ENCODE measurements at regions of chr18 and their contacts with region 1.

Region 1: DNA sequence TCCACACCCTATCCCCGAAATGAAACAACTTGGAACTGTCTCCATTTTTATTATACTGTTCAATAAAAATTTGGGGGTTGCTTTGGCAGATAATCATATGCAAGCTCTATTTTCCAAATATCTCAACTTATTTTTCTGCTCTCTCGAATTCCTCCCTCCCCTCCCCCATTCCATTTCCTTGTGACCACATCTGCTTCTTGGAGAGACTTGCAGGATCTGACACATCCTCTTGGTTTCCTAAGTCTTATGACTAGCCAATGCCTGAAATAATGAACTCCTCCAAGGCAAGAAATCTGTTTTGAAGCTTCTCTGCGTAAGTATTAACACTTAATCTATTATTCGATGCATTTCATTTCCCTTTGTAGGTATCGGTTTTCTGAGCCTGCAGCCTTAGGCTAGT is 16.1 kb downstream of the TGIF1 start:
- DNase-seq: no peak
- H3K4me3 ChIP-seq: no peak overlapping the region
- H3K27ac ChIP-seq: no peak overlapping the region
- H3K27me3 ChIP-seq: no peaks in the 10 kb centered on the region
- CTCF ChIP-seq: no peak

Region 2: GRCh38 chr18:3153107-3153704 is 312.8 kb before region 1 on chr18:
- CTCF ChIA-PET with region 1: no interaction called
- POLR2A ChIA-PET with region 1: no interaction called
- DNase-seq: no peak
- H3K4me3 ChIP-seq: no peak overlapping the region
- H3K27ac ChIP-seq: no peak overlapping the region
- H3K27me3 ChIP-seq: peaks cover 3% of the 10 kb centered on the region
- CTCF ChIP-seq: no peak

Region 3: GRCh38 chr18:3481696-3482210 is 15.7 kb after region 1 on chr18:
- CTCF ChIA-PET with region 1: interaction called, 15 read pairs
- POLR2A ChIA-PET with region 1: no interaction called
- DNase-seq: peak; percentile 13
- H3K4me3 ChIP-seq: no peak overlapping the region
- H3K27ac ChIP-seq: no peak overlapping the region
- H3K27me3 ChIP-seq: no peaks in the 10 kb centered on the region
- CTCF ChIP-seq: peak; percentile 73